PC-3 (cell line): ENCODE measurements at regions of chr12 and their contacts with region 1.

Region 1: DNA sequence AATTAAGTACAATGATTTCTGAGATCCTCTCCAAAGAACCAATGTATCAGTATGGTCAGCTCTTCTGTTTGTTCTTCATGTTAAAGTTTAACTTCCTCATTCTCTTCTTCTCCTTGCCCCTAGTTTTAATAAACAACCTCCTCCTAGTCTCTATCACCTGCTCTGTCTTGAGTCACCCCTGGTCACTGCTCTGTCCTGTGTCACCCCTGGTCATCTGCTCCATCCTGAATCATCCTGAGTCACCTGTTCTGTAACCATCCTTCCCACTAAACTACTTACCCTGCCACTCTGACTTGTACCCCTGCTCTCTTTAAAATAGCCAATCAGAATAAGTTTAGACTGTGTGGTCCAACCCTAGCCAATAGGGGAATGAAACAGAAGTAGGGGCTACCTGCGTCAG is 100.5 kb downstream of the ALG10B start:
- DNase-seq: peak; percentile 65
- ATAC-seq: peak; percentile 74
- H3K4me3 ChIP-seq: no peak overlapping the region
- H3K27ac ChIP-seq: peak overlapping the region; percentile 18; the same call in 1 of the 2 replicates
- H3K4me1 ChIP-seq: peaks cover 5% of the 10 kb centered on the region
- H3K27me3 ChIP-seq: no peaks in the 10 kb centered on the region
- CTCF ChIP-seq: no peak

Region 2: DNA sequence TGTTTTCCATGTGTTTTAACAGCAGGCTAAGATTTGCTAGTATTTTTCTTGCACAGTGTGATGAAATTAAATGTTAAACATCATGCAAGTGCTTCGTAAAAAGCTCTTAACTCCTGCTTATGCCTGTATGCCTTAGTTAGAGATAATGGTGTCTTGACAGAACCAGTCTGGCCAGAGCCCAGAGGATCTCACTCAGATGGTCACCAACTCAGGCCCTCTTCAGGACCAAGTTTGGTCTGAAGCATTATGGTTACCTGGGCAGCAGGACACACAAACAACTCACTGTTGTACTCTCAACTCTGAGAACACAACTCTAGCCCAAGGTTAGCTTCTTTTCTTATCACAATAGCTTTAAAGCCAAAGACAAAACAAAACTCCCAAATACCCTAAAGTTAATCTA is 910.4 kb after region 1 on chr12:
- CTCF ChIA-PET with region 1: no interaction called
- POLR2A ChIA-PET with region 1: interaction called, 11 read pairs
- intact Hi-C with region 1: no loop called
- DNase-seq: no peak
- ATAC-seq: no peak
- H3K4me3 ChIP-seq: no peak overlapping the region
- H3K27ac ChIP-seq: no peak overlapping the region
- H3K4me1 ChIP-seq: peaks cover 5% of the 10 kb centered on the region; the same call in 1 of the 2 replicates
- H3K27me3 ChIP-seq: no peaks in the 10 kb centered on the region
- CTCF ChIP-seq: no peak